ENCODE measurements at regions of chr11 and their contacts with region 1.

Region 1: GRCh38 chr11:1073261-1073724 is 1.4 kb upstream of the MUC2 start:
- DNase-seq: peak; percentile 76
- ATAC-seq: peak; percentile 61
- H3K4me3 ChIP-seq: no peak overlapping the region
- H3K27ac ChIP-seq: peak overlapping the region; percentile 99
- H3K4me1 ChIP-seq: peaks cover 28% of the 10 kb centered on the region
- H3K27me3 ChIP-seq: no peaks in the 10 kb centered on the region
- CTCF ChIP-seq: no peak

Region 2: DNA sequence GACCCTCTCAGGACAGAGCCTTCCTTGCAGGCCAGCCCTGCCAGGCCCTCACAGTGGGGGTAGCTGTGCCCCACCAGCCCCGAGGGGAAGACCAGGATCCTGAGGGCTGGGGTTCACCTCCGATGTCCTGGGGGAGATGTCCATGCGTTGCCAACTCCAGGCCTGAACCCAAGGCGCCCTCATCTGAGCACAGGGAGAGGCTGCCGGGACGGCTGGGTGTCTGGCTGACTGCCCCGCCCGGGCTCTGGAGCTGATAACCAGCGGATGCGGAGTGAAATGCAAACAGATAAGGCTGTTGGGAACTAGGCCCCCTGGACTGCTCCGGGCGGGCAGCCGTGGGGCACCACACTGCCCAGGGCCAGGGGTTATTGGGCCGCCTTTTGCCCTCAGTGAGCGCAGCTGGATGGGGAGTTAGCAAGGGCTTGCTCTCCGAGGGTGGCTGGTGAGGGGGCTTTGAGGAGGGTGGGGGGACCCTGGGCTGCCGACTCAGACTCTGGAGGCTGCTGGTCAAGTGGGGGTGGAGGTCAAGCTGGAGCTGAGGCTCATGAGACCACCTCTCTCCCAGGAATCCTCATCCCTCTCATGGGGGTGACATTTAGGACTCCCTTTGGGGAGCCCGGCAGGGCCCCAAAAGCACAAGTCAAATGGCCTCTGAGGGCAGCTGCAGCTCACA is 31.2 kb before region 1 on chr11:
- CTCF ChIA-PET with region 1: no interaction called
- POLR2A ChIA-PET with region 1: no interaction called
- intact Hi-C with region 1: no loop called
- DNase-seq: no peak
- ATAC-seq: 0 out of 2 replicates have a peak, but pooled peaks have one; percentile 5
- H3K4me3 ChIP-seq: no peak overlapping the region
- H3K27ac ChIP-seq: peak overlapping the region; percentile 73; the same call in 1 of the 2 replicates
- H3K4me1 ChIP-seq: peaks cover 26% of the 10 kb centered on the region
- H3K27me3 ChIP-seq: no peaks in the 10 kb centered on the region
- CTCF ChIP-seq: no peak

Region 3: GRCh38 chr11:1119604-1120146 is 46.4 kb after region 1 on chr11:
- CTCF ChIA-PET with region 1: no interaction called
- POLR2A ChIA-PET with region 1: no interaction called
- intact Hi-C with region 1: loop called (anchors 1 kb)
- DNase-seq: no peak
- ATAC-seq: no peak
- H3K4me3 ChIP-seq: no peak overlapping the region
- H3K27ac ChIP-seq: no peak overlapping the region
- H3K4me1 ChIP-seq: no peaks in the 10 kb centered on the region
- H3K27me3 ChIP-seq: no peaks in the 10 kb centered on the region
- CTCF ChIP-seq: no peak